Activated CD4-positive, alpha-beta memory T cell treated with anti-CD3 and anti-CD28 coated beads, Interleukin-2, amount 10 ng/mL, durations not matched to agents 7 days and 5 days (primary cell): ENCODE measurements at regions of chr3 and their contacts with region 1.

Region 1: DNA sequence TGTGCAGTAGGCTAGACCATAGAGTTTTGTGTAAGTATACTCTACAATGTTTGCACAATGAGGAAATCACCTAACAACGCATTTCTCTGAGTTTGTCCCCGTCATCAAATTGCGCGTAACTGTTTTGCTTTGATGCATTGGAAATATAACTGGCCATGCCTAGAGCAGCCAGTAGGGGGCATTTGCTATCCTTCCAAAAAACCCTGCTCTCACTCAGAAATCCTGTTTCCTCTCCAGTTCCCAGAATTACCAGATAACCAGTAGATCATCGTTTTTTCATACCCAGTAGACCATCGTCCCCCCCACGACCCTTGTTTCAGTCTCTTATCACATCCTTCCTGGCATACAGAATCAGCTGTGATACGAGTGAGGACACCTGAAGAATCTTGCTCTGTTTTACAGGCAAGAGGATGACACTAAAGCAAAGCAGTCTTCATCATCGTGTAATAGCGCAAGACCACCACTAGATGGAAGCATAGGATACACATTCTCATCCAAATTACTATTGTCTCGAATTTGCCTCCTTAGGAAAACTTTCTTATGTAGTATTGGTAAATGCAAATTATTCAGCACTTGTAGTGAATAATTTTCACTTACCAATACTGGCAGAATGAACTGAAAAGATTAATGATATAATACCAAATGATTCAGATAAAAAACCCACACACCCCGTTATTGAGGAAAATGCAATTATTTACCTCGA is 4.4 kb upstream of the GABRR3 start:
- DNase-seq: peak; percentile 83
- H3K4me3 Mint-ChIP-seq: peak overlapping the region; percentile 76
- H3K27ac Mint-ChIP-seq: peak overlapping the region; percentile 87
- H3K4me1 Mint-ChIP-seq: peaks cover 24% of the 10 kb centered on the region
- H3K27me3 Mint-ChIP-seq: peaks cover 22% of the 10 kb centered on the region

Region 2: GRCh38 chr3:97764407-97765238 is 274.9 kb before region 1 on chr3 and contains the start of gene ARL6:
- CTCF ChIA-PET with region 1: interaction called, 12 read pairs
- POLR2A ChIA-PET with region 1: interaction called, 3 read pairs
- DNase-seq: peak; percentile 78
- H3K4me3 Mint-ChIP-seq: peak within 1 kb of the TSS; percentile 97
- H3K27ac Mint-ChIP-seq: peak within 1 kb of the TSS; percentile 84
- H3K4me1 Mint-ChIP-seq: peaks cover 38% of the 10 kb centered on the region
- H3K27me3 Mint-ChIP-seq: no peaks in the 10 kb centered on the region
- total RNA-seq, gene ARL6: 5.1 to 7.6 TPM

Region 3: GRCh38 chr3:98022978-98023820 is 16.3 kb before region 1 on chr3:
- CTCF ChIA-PET with region 1: interaction called, 33 read pairs
- POLR2A ChIA-PET with region 1: interaction called, 7 read pairs
- DNase-seq: peak; percentile 92
- H3K4me3 Mint-ChIP-seq: no peak overlapping the region
- H3K27ac Mint-ChIP-seq: no peak overlapping the region
- H3K4me1 Mint-ChIP-seq: peaks cover 16% of the 10 kb centered on the region
- H3K27me3 Mint-ChIP-seq: no peaks in the 10 kb centered on the region

Region 4: DNA sequence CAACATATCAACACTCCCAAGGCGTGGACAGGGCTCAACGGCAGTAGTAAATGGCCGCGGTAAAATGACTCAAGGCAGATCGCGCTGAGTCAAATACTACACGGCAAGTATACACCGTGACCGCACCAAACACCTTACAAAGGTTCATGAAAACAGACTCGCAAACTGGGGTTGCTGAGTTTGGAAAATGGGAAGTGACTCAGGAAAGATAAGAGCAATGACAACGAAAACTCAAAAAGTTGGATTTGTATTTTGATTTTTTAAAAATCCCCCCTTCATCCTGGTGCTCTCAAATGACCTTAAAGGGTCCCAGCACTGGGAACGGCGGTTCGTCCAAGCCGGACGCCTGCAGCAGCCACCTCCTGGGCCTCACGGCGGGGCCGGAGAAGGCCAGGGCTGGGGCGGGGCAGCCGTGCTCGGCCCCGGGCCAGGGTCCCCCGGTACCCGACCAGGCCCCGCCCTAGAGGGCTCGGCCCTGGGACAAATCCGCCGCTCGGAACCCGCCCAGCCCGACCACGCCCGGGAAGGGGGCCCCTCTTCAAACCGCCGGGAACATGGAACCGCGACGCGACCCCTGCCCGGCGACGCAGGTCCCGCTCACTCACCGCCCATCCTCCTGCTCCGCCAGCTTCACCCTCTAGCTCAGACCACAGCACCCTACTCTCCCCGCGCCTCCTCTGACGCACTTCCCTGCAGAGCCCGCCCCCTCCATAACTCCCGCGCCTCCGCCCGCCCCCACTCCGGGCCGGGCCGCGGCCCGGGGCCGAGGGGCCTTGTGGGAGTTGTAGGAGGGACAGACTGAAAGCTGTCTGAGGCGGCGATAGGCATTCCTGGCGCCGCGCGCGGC is 483.0 kb after region 1 on chr3 and contains the start of gene CLDND1:
- CTCF ChIA-PET with region 1: interaction called, 3 read pairs
- POLR2A ChIA-PET with region 1: interaction called, 10 read pairs
- DNase-seq: peak; percentile 98
- H3K4me3 Mint-ChIP-seq: peak within 1 kb of the TSS; percentile 98
- H3K27ac Mint-ChIP-seq: peak within 1 kb of the TSS; percentile 92
- H3K4me1 Mint-ChIP-seq: peaks cover 74% of the 10 kb centered on the region
- H3K27me3 Mint-ChIP-seq: no peaks in the 10 kb centered on the region
- total RNA-seq, gene CLDND1: 673 to 683 TPM

Region 5: GRCh38 chr3:98602078-98602678 is 562.7 kb after region 1 on chr3:
- CTCF ChIA-PET with region 1: interaction called, 16 read pairs
- POLR2A ChIA-PET with region 1: no interaction called
- DNase-seq: no peak
- H3K4me3 Mint-ChIP-seq: no peak overlapping the region
- H3K27ac Mint-ChIP-seq: no peak overlapping the region
- H3K4me1 Mint-ChIP-seq: no peaks in the 10 kb centered on the region
- H3K27me3 Mint-ChIP-seq: peaks cover 16% of the 10 kb centered on the region